Pancreas (tissue), 10 donors: ENCODE measurements at regions of chr2 and their contacts with region 1.

Region 1: GRCh38 chr2:20097879-20098714 is 46.7 kb upstream of the LAPTM4A start:
- DNase-seq: peak; percentile 67 to 92 (median 84)
- ATAC-seq: peak; percentile 88 to 95 (median 94)
- H3K4me3 ChIP-seq: no peak overlapping the region
- H3K27ac ChIP-seq: no peak overlapping the region
- H3K4me1 ChIP-seq: no peaks in the 10 kb centered on the region
- H3K27me3 ChIP-seq: no peaks in the 10 kb centered on the region
- CTCF ChIP-seq: peak; percentile 70 to 89 (median 77)

Region 2: DNA sequence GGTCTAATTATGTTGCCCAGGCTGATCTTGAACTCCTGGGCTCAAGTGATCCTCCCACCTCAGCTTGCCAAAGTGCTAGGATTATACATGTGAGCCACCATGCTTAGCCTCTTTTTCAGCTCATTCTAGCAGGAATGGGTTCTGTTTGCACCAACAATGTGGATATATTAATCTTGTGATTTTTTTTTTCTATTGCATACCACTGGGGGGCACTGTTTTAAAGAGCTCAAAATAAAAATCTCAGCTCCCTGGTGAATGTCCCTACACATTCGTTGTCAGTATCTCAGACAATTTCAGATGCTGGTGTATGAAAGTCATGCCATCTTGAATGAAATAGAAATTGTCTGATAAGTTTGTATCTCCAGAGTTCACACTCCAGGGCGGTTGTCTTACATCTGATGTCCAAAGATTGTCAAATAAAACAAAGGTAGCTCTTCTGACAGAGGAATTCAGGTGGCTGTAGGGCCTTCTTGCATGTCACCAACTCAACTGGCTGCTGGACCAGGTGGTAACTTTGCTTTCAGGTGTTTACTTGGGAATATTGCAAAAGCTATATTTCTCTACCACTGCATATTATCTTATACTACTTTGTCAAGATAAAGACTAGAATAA is 82.5 kb before region 1 on chr2:
- intact Hi-C with region 1: loop called in 2 of 3 experiments (anchors 5 kb)
- DNase-seq: no peak
- ATAC-seq: peak; percentile 59 to 83 (median 74)
- H3K4me3 ChIP-seq: no peak overlapping the region
- H3K27ac ChIP-seq: no peak overlapping the region
- H3K4me1 ChIP-seq: no peaks in the 10 kb centered on the region
- H3K27me3 ChIP-seq: no peaks in the 10 kb centered on the region
- CTCF ChIP-seq: peak; percentile 31 to 45 (median 34)

Region 3: DNA sequence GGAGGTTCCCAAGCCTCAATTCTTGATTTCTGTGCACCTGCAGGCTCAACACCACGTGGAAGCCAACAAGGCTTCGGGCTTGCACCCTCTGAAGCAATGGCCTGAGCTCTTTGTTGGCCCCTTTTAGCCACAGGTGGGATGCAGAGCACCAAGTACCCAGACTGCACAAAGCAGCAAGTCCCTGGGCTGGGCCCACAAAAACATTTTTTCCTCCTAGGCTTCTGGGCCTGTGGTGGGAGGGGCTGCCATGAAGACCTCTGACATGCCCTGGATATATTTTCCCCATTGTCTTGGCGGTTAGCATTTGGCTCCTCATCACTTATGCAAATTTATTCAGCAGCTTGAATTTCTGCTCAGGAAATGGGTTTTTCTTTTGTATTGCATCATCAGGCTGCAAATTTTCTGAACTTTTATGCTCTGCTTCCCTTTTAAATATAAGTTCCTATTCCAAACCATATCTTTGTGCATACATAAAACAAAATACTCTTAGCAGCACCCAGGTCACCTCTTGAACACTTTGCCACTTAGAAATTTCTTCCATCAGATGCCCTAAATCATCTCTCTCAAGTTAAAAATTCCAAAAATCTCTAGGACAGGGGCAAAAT is 76.6 kb before region 1 on chr2:
- intact Hi-C with region 1: loop called in 2 of 3 experiments (anchors 5 kb)
- DNase-seq: no peak
- ATAC-seq: no peak
- H3K4me3 ChIP-seq: no peak overlapping the region
- H3K27ac ChIP-seq: no peak overlapping the region
- H3K4me1 ChIP-seq: no peaks in the 10 kb centered on the region
- H3K27me3 ChIP-seq: no peaks in the 10 kb centered on the region
- CTCF ChIP-seq: no peak

Region 4: GRCh38 chr2:20172273-20173055 is 74.4 kb after region 1 on chr2:
- intact Hi-C with region 1: no loop called
- DNase-seq: no peak
- ATAC-seq: peak in 1 of 4 donors; percentile 37
- H3K4me3 ChIP-seq: no peak overlapping the region
- H3K27ac ChIP-seq: no peak overlapping the region
- H3K4me1 ChIP-seq: no peaks in the 10 kb centered on the region
- H3K27me3 ChIP-seq: no peaks in the 10 kb centered on the region
- CTCF ChIP-seq: no peak

Region 5: DNA sequence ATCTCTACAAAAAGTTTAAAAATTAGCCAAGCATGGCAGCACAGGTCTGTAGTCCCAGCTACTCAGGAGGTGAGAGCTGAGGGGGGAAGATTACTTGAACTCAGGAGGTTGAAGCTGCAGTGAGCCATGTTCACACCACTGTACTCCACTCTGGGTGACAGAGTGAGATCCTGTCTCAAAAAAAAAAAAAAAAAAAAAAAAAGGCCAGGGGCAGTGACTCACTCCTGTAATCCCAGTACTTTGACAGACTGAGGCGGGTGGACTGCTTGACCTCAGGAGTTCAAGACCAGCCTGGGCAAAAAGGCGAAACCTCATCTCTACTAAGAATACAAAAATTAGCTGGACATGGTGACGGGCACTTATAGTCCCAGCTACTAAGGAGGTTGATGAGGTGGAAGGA is 215.6 kb after region 1 on chr2:
- intact Hi-C with region 1: no loop called
- DNase-seq: no peak
- ATAC-seq: peak in 1 of 4 donors; percentile 28
- H3K4me3 ChIP-seq: no peak overlapping the region
- H3K27ac ChIP-seq: no peak overlapping the region
- H3K4me1 ChIP-seq: no peaks in the 10 kb centered on the region
- H3K27me3 ChIP-seq: no peaks in the 10 kb centered on the region
- CTCF ChIP-seq: no peak